K562 (cell line): ENCODE measurements at regions of chr1 and their contacts with region 1.

Region 1: DNA sequence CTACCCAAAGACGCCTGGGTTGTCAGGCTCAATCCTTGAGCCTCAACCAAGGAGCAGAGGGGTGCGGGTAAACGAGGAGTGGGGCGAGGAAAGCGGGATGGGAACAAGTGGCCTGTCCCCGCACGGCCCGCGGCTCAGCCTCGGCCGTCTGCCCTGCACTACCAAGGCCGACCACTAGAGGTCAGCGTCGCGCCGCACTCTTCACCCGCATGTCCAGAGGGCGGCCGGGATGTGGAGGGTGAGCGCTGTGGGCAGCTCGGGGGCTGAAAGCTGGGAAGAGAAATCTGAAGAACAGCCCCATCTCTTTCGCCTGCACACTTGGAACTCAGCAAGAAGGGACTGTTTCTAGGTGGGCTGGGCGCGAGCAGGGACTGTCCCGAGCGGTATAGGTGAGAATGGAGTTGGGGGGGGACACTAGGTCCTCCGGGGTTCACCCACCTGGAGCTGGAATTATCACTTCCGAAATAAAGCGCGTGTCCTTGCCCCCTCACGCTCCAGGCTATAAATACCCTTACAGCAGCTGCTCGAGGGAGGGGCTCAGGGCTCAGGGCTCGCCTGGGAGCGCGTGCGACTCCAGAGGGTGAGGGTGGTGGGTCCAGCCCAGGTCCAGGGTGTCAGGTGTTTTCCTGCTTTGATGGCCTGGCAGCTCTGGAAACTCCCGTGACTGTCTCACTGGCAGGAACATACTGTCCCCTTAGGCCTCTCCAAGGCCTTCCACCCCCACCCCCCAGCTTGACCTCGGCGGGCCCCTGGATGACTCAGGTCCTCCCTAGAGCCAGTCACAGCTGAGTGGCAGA is 9.8 kb downstream of the SLC30A2 start:
- DNase-seq: peak; percentile 91 to 94 (median 92)
- ATAC-seq: peak; percentile 92
- H3K4me3 ChIP-seq: peak overlapping the region; percentile 77
- H3K27ac ChIP-seq: peak overlapping the region; percentile 87
- H3K4me1 ChIP-seq: peaks cover 25 to 57% of the 10 kb centered on the region in 2 experiments
- H3K27me3 ChIP-seq: no peaks in the 10 kb centered on the region
- CTCF ChIP-seq: peak; percentile 97 to 99 (median 98)
- EP300 ChIP-seq: no peak; the same call in 1 of the 2 replicates
- POLR2A ChIP-seq: no peak
- RAD21 ChIP-seq: peak; percentile 99

Region 2: DNA sequence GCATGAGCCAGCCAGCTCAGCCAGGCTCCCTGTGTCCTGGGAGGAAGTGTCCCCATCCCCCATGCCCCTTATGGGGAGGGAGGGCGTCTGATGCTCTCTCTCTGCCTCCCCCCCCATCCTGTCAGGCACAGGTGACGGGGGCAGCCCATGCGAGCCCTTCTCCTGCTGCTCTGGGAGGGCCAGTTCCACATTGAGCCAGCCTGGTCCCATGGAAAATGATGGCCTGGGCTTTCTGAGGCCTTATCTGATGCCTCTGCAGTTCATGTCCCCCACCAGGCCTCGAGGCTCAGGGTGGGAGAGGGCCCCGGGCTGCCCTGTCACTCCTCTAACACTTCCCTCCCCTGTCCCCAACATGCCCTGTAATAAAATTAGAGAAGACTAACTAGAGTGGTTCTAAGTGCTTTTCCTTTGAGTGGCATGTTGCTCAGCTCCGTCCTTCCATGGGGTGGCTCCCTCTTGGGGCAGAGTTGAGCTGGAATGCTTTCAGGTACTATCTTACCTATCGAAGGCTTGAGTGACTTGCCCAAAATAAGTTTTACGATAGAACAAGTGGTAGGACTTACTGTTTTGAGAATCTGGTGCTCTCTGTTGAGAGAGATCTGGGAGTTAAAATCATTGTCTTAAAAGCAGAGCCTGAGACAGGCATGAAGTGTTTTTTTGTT is 218.2 kb before region 1 on chr1:
- CTCF ChIA-PET with region 1: no interaction called
- POLR2A ChIA-PET with region 1: no interaction called
- in situ Hi-C with region 1: no loop called
- intact Hi-C with region 1: no loop called
- DNase-seq: peak; percentile 54 to 67 (median 55)
- ATAC-seq: 0 out of 3 replicates have a peak, but pooled peaks have one; percentile 1
- H3K4me3 ChIP-seq: no peak overlapping the region
- H3K27ac ChIP-seq: peak overlapping the region; percentile 91
- H3K4me1 ChIP-seq: peaks cover 34 to 61% of the 10 kb centered on the region in 2 experiments
- H3K27me3 ChIP-seq: no peaks in the 10 kb centered on the region
- CTCF ChIP-seq: peak; percentile 52 to 74 (median 61); a peak in 5 of 6 replicates
- EP300 ChIP-seq: no peak
- POLR2A ChIP-seq: no peak
- RAD21 ChIP-seq: peak; percentile 9 to 56; a peak in 2 of 4 replicates

Region 3: DNA sequence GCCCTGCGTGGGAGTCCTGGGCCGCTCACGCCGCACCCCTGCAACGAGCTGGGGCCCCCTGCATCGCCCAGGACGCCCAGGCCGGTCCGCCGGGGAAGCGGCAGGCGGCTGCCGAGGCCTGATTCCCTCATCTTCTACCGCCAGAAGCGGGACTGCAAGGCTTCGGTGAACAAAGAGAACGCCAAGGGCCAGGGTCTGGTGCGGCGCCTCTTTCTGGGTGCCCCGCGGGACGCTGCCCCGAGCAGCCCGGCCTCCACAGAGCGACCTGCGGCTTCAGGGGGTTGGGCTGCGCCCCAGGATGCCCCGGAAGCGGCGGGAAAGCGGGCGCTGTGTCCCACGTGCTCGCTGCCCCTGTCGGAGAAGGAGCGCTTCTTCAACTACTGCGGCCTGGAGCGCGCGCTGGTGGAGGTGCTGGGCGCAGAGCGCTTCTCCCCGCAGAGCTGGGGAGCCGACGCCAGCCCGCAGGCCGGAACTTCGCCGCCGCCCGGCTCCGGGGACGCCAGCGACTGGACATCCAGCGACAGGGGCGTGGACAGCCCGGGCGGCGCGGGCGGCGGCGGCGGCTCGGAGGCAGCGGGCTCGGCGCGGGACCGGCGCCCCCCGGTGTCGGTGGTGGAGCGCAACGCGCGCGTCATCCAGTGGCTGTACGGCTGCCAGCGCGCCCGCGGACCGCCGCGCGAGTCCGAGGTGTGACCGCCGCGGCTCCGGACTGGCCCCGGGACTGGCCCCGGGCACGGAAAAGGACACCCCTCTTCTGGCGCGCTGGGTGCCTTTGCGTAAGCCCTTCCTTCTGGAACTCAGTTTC is 125.5 kb after region 1 on chr1:
- CTCF ChIA-PET with region 1: interaction called, 10 read pairs
- POLR2A ChIA-PET with region 1: no interaction called
- in situ Hi-C with region 1: no loop called
- intact Hi-C with region 1: loop called (anchors 2 kb)
- DNase-seq: peak; percentile 89 to 95 (median 92)
- ATAC-seq: peak; percentile 86
- H3K4me3 ChIP-seq: peak overlapping the region; percentile 43
- H3K27ac ChIP-seq: peak overlapping the region; percentile 80
- H3K4me1 ChIP-seq: peaks cover 29 to 58% of the 10 kb centered on the region in 2 experiments
- H3K27me3 ChIP-seq: no peaks in the 10 kb centered on the region
- CTCF ChIP-seq: peak; percentile 27 to 73 (median 63); a peak in 4 of 6 replicates
- EP300 ChIP-seq: peak; percentile 4; the same call in 1 of the 2 replicates
- POLR2A ChIP-seq: peak; percentile 81
- RAD21 ChIP-seq: peak; percentile 60 to 84